Activated naive CD4-positive, alpha-beta T cell treated with anti-CD3 and anti-CD28 coated beads for 36 hours (primary cell): ENCODE measurements at regions of chr17 and their contacts with region 1.

Region 1: DNA sequence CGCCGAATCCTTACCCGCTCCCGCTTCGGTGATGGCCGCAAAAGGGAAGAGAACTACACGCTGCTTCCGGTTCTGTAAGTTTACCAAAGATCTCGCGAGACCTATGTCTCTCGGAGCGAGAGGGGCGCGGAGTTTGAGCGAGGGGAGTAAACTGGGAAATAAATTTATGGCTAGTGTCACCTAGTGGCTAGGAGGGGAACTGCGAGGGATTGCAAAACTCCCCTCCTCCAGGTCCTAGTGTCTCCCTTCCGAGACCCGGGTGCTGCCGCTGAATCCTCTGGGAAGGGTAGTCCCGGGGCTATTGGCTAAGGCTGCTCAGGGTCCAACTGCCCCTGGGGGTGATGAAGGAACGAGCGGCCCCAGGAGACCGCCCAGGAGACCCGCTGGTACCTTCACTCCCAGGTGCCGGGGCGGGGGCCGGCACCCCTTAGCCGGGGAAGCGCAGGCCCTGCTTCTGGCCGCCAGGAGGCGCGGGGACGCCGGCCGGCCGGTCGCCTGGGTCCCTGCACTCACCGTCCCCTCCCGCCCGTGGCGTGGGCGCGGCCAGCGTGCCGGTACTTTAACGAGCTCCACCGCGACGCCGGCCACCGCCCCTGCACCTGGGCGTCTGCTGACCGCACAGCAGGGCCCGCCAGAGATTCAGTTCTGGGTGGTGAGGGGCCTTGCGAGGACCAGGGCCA is at the start of gene RPL26:
- DNase-seq: peak; percentile 98
- H3K4me3 Mint-ChIP-seq: peak within 1 kb of the TSS; percentile 99
- H3K27ac Mint-ChIP-seq: peak within 1 kb of the TSS; percentile 98
- H3K4me1 Mint-ChIP-seq: peaks cover 57% of the 10 kb centered on the region
- H3K27me3 Mint-ChIP-seq: no peaks in the 10 kb centered on the region
- total RNA-seq, gene RPL26: 3,652 to 3,827 TPM

Region 2: DNA sequence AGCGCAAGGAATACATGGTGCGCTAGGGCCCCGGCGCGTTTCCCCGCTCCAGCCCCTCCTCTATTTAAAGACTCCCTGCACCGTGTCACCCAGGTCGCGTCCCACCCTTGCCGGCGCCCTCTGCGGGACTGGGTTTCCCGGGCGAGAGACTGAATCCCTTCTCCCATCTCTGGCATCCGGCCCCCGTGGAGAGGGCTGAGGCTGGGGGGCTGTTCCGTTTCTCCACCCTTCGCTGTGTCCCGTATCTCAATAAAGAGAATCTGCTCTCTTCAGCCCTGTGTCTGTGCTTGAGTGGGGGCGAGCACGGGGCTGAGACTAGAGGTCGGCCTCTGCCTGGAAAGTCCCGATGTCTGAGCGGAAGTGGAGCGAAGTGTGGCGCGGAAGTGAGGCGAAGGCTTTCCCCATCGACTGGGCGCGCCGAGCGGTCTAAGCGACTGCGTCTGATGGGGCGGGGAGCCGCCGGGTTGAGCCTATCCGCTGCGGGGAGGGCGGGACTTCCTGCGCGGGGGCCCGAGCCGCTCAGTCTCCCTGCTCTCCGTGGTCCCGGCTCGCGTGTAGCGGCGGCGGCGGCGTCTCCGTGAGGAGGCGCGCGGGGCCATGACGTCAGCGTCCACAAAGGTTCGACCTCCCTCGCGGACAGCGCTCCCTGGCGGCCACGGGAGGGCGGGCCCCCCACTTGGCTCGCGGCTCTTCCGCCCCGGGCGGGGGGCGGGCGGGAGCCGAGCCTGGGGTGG is 1368.9 kb before region 1 on chr17:
- CTCF ChIA-PET with region 1: no interaction called
- intact Hi-C with region 1: loop called (anchors 5 kb)
- DNase-seq: peak; percentile 98
- H3K4me3 Mint-ChIP-seq: peak overlapping the region; percentile 93
- H3K27ac Mint-ChIP-seq: peak overlapping the region; percentile 100
- H3K4me1 Mint-ChIP-seq: peaks cover 50% of the 10 kb centered on the region
- H3K27me3 Mint-ChIP-seq: no peaks in the 10 kb centered on the region

Region 3: GRCh38 chr17:8138672-8139371 is 244.5 kb before region 1 on chr17:
- CTCF ChIA-PET with region 1: no interaction called
- intact Hi-C with region 1: loop called (anchors 5 kb)
- DNase-seq: peak; percentile 98
- H3K4me3 Mint-ChIP-seq: no peak overlapping the region
- H3K27ac Mint-ChIP-seq: no peak overlapping the region
- H3K4me1 Mint-ChIP-seq: peaks cover 13% of the 10 kb centered on the region
- H3K27me3 Mint-ChIP-seq: no peaks in the 10 kb centered on the region

Region 4: GRCh38 chr17:8248751-8249607 is 134.3 kb before region 1 on chr17 and contains the start of gene PFAS:
- CTCF ChIA-PET with region 1: interaction called, 3 read pairs
- intact Hi-C with region 1: loop called (anchors 1 kb)
- DNase-seq: peak; percentile 97
- H3K4me3 Mint-ChIP-seq: peak within 1 kb of the TSS; percentile 99
- H3K27ac Mint-ChIP-seq: peak within 1 kb of the TSS; percentile 100
- H3K4me1 Mint-ChIP-seq: peaks cover 37% of the 10 kb centered on the region
- H3K27me3 Mint-ChIP-seq: no peaks in the 10 kb centered on the region
- total RNA-seq, gene PFAS: 106 to 110 TPM

Region 5: GRCh38 chr17:8435245-8436168 is 52.2 kb after region 1 on chr17 and contains the start of gene NDEL1:
- CTCF ChIA-PET with region 1: interaction called, 4 read pairs
- intact Hi-C with region 1: loop called (anchors 1 kb)
- DNase-seq: peak; percentile 99
- H3K4me3 Mint-ChIP-seq: peak within 1 kb of the TSS; percentile 96
- H3K27ac Mint-ChIP-seq: peak within 1 kb of the TSS; percentile 93
- H3K4me1 Mint-ChIP-seq: peaks cover 32% of the 10 kb centered on the region
- H3K27me3 Mint-ChIP-seq: no peaks in the 10 kb centered on the region
- total RNA-seq, gene NDEL1: 43.1 to 47.1 TPM

Region 6: GRCh38 chr17:8745586-8746500 is 362.6 kb after region 1 on chr17:
- CTCF ChIA-PET with region 1: interaction called, 16 read pairs
- intact Hi-C with region 1: loop called (anchors 1 kb)
- DNase-seq: peak; percentile 74
- H3K4me3 Mint-ChIP-seq: peak overlapping the region; percentile 81
- H3K27ac Mint-ChIP-seq: peak overlapping the region; percentile 53
- H3K4me1 Mint-ChIP-seq: peaks cover 8% of the 10 kb centered on the region
- H3K27me3 Mint-ChIP-seq: no peaks in the 10 kb centered on the region

Region 7: DNA sequence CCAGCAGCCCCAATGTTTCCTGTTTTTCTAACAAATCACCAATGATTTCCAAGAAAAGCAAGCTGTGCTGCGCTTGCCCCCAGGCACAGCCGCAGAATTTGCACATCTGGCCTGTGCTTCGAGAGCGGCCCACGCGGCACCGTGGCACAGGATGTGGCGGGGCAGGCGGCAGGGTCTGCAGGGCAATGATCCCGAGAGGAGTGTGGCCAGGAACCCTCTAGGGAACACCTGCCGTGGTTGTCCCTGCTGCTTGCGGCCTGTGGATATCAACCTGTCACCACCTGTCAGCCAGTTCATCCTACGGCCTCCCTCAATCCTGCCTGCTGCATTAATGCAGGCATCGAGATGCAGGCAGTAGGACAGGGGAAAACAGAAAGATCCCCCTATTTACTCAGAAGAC is 558.2 kb after region 1 on chr17:
- CTCF ChIA-PET with region 1: no interaction called
- intact Hi-C with region 1: loop called (anchors 5 kb)
- DNase-seq: peak; percentile 73
- H3K4me3 Mint-ChIP-seq: peak overlapping the region; percentile 58
- H3K27ac Mint-ChIP-seq: peak overlapping the region; percentile 86
- H3K4me1 Mint-ChIP-seq: peaks cover 66% of the 10 kb centered on the region
- H3K27me3 Mint-ChIP-seq: no peaks in the 10 kb centered on the region